ENCODE measurements at regions of chr16 and their contacts with region 1.

Region 1: DNA sequence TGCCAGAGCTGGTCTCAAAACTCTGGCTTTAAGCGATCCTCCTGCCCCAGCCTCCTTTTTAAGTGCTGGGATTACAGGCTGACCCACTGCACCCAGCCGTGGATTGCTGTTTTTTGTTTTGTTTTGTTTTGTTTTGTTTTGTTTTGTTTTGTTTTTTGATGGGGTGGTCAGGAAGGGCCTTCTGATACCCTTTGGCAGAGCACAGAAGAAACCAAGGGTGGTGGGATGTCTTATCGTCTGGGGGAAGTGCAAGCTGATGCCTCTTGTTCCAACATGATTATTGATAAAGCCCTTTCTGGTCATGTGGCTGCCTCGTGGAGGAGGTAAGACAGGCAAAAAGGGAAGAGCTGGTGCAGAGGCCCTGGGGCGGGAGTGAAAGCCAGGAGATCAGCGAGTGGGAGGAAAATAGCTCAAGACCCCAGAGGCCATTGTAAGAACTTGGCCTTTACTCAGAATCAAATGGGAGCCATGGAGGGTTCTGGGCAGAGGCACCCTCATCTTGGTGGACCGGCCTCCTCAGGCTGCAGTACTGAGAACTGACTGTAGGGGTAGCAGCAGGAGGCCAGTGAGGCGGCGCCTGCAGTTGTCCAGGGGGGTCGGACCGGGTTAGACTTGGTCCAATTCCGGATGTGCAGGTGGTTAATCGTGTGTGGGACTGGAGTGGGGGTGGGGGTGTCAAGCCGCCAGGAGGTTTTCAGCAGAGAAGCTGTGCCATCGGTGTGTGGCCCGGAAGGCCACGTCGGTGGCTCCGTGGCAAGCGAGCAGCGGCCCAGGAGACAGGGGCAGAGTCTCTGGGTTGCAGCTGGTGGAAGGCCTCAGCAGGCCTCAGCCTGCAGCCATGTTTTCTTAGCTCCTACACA is 84.4 kb upstream of the GSE1 start:
- DNase-seq: no peak
- H3K4me3 ChIP-seq: no peak overlapping the region
- H3K27ac ChIP-seq: no peak overlapping the region
- H3K4me1 ChIP-seq: peaks cover 3 to 24% (median 13%) of the 10 kb centered on the region in 4 experiments
- H3K27me3 ChIP-seq: no peaks in the 10 kb centered on the region
- CTCF ChIP-seq: peak; percentile 37 to 57 (median 47)
- EP300 ChIP-seq: no peak
- POLR2A ChIP-seq: no peak
- RAD21 ChIP-seq: no peak; a peak in 1 of 4 replicates

Region 2: DNA sequence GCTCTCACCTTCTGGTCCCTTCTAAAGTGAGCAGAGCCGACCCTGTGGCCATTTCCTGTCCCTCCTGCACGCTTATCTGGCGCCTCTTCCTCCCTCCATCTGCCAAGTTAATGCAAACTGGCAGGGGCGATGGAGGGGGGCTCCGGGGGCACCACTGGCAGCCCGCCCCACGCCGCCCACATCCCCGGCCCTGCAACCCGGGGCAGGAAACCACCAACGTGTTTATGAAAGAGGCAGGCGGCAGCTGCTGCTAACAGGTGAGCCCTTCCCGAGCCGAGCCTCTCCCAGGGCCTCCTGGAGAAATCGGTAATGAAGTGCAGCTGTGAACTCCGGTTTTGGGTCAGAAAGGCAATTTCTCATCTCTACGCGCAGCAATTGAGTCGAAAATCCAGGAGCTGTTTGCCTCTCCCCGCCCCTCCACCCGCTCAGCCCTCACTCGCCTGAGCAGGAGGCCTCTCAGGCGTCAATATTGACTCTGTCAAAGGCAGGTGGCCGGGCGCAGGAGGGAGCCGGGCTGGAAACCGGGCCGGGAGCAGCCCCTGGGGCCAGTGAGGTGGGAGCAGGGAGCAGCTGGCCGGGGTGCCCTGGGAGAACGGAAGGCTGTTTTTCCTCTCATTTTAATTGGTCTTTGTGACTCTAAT is 80.1 kb before region 1 on chr16:
- CTCF ChIA-PET with region 1: interaction called, 12 read pairs
- POLR2A ChIA-PET with region 1: interaction called, 3 read pairs
- DNase-seq: no peak
- H3K4me3 ChIP-seq: no peak overlapping the region
- H3K27ac ChIP-seq: no peak overlapping the region
- H3K4me1 ChIP-seq: peaks cover 0 to 23% (median 16%) of the 10 kb centered on the region in 4 experiments; a peak in 6 of 7 replicates
- H3K27me3 ChIP-seq: no peaks in the 10 kb centered on the region
- CTCF ChIP-seq: no peak
- EP300 ChIP-seq: no peak
- POLR2A ChIP-seq: no peak
- RAD21 ChIP-seq: no peak

Region 3: DNA sequence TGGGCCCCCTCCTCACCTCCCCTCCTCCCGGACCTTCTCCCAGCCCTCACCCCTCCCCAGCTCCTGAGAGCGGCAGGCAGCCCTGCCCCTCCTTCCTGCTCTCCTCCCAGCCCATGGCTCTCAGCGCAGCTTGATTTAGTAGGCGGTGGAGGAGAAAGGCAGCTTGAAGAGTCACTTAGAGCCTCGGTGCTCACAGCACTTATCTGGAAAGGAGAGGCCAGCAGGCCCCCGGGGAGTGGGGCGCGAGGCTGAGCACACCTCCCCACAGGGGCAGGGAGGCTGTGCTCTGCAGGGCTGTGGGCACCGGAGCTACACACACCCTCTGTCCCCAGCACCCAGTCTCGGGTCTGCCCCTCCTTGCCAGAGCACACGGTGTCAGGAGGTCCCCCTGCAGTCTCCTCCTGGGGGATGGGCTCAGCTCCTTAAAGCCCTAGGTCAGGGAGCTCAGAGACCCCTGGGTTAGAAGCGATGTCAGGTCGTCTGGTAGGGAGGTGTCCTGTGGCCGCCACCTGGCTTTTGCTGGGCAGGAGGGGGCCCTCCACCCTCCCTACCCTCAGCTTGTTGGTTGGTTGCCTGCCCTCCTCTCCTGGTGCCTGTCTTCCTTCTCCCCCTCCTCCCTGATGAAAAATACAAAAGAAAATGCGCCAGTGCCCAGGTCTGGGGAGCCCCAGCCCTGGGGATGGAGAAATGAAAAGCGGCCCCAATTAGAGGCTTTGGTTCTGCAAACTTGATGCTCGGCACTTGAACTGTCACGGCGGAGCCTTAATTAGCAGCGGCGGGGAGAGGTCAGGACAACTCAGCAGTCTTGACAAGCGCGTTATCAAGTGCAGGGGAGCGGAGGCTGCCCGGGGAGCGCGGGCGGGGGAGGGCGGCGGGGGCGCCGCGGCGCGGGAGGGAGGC is 66.7 kb before region 1 on chr16:
- CTCF ChIA-PET with region 1: interaction called, 11 read pairs
- POLR2A ChIA-PET with region 1: no interaction called
- DNase-seq: peak in 1 of 2 experiments; percentile 76
- H3K4me3 ChIP-seq: peak overlapping the region; percentile 4 to 57 (median 46)
- H3K27ac ChIP-seq: no peak overlapping the region
- H3K4me1 ChIP-seq: peaks cover 7 to 33% (median 25%) of the 10 kb centered on the region in 4 experiments
- H3K27me3 ChIP-seq: peaks cover 5 to 49% (median 36%) of the 10 kb centered on the region in 4 experiments; a peak in 6 of 7 replicates
- CTCF ChIP-seq: no peak
- EP300 ChIP-seq: no peak
- POLR2A ChIP-seq: no peak
- RAD21 ChIP-seq: no peak

Region 4: DNA sequence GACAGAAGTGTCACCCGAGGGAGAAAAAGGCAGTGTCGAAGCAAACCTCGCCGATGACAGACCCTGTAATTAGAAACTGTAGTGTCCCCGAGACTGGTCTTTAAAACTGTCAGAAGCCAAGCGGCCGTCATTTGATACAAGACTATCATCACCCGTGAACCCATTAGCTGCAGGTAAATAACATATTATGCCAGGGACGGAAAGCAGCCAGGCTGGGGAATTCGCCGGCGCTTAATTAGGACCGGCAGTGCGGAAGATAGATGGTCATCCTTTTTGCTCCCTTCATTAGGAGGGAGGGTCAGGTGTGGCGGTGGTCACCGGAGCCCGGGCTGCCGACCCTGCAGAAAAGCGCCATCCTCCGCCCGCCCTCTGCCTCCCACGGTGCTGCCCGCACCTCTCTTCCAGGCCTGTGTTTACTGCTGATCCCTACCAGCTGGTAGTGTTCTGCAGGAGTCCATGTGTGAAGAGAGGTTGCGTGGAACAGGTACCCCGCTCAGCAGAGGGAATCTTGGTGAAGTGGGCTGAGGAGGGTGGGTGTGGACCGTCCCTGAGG is 25.0 kb before region 1 on chr16:
- CTCF ChIA-PET with region 1: interaction called, 21 read pairs
- POLR2A ChIA-PET with region 1: interaction called, 3 read pairs
- DNase-seq: no peak
- H3K4me3 ChIP-seq: no peak overlapping the region
- H3K27ac ChIP-seq: no peak overlapping the region
- H3K4me1 ChIP-seq: peaks cover 2 to 14% (median 11%) of the 10 kb centered on the region in 4 experiments; a peak in 6 of 7 replicates
- H3K27me3 ChIP-seq: no peaks in the 10 kb centered on the region; a peak in 1 of 7 replicates
- CTCF ChIP-seq: no peak
- EP300 ChIP-seq: no peak
- POLR2A ChIP-seq: no peak
- RAD21 ChIP-seq: no peak

Region 5: GRCh38 chr16:85514595-85515318 is 14.0 kb before region 1 on chr16:
- CTCF ChIA-PET with region 1: interaction called, 29 read pairs
- POLR2A ChIA-PET with region 1: interaction called, 7 read pairs
- DNase-seq: no peak
- H3K4me3 ChIP-seq: no peak overlapping the region
- H3K27ac ChIP-seq: no peak overlapping the region
- H3K4me1 ChIP-seq: peaks cover 0 to 20% (median 14%) of the 10 kb centered on the region in 4 experiments; a peak in 6 of 7 replicates
- H3K27me3 ChIP-seq: no peaks in the 10 kb centered on the region; a peak in 1 of 7 replicates
- CTCF ChIP-seq: no peak
- EP300 ChIP-seq: no peak
- POLR2A ChIP-seq: no peak
- RAD21 ChIP-seq: no peak

Region 6: GRCh38 chr16:85541980-85542900 is 13.5 kb after region 1 on chr16:
- CTCF ChIA-PET with region 1: interaction called, 153 read pairs
- POLR2A ChIA-PET with region 1: interaction called, 4 read pairs
- DNase-seq: no peak
- H3K4me3 ChIP-seq: no peak overlapping the region
- H3K27ac ChIP-seq: no peak overlapping the region
- H3K4me1 ChIP-seq: peaks cover 0 to 14% (median 9%) of the 10 kb centered on the region in 4 experiments; a peak in 6 of 7 replicates
- H3K27me3 ChIP-seq: no peaks in the 10 kb centered on the region
- CTCF ChIP-seq: no peak
- EP300 ChIP-seq: no peak
- POLR2A ChIP-seq: no peak
- RAD21 ChIP-seq: no peak

Region 7: DNA sequence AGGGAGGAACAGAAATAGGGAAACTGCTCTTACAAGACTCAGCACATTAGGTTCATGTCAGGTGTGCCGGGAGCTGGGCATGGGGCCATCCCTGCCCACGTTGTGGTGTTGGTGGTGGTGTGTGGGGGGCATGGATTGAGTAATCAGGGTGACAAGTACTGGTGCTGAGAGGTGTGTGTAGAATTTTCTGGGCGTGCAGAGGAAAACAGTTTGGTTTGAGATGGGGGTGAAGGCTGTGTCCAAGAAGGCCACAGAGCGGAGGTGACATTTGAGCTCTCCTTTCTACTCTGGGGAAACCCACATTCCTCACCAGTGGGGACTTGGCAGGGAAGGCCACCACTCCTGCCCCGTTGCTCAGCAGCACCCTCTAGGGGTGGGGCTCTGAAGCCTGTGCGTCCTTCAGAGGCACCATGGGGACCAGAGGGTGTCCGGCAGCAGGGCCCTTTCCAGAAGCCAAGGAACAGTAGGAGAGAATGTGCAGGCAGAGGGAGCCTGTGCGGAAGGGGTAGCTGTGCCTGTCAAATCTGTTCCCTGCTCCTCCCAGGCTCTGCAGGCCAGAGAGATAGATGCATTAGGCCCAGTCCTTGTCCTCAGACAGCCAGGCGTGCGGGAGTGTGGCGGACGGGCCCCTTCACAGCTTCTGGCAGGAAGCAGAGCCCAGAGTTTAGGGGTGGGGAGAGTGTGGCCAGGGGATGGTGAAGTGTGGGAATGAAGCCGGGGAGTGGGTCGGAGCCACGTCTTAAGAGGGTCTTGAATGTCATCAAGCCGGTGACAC is 35.7 kb after region 1 on chr16:
- CTCF ChIA-PET with region 1: interaction called, 48 read pairs
- POLR2A ChIA-PET with region 1: interaction called, 3 read pairs
- DNase-seq: no peak
- H3K4me3 ChIP-seq: no peak overlapping the region
- H3K27ac ChIP-seq: no peak overlapping the region
- H3K4me1 ChIP-seq: peaks cover 14 to 52% (median 27%) of the 10 kb centered on the region in 4 experiments
- H3K27me3 ChIP-seq: no peaks in the 10 kb centered on the region
- CTCF ChIP-seq: peak; percentile 53 to 70 (median 68)
- EP300 ChIP-seq: no peak
- POLR2A ChIP-seq: no peak
- RAD21 ChIP-seq: peak in 1 of 2 experiments; percentile 18; a peak in 1 of 4 replicates

Region 8: DNA sequence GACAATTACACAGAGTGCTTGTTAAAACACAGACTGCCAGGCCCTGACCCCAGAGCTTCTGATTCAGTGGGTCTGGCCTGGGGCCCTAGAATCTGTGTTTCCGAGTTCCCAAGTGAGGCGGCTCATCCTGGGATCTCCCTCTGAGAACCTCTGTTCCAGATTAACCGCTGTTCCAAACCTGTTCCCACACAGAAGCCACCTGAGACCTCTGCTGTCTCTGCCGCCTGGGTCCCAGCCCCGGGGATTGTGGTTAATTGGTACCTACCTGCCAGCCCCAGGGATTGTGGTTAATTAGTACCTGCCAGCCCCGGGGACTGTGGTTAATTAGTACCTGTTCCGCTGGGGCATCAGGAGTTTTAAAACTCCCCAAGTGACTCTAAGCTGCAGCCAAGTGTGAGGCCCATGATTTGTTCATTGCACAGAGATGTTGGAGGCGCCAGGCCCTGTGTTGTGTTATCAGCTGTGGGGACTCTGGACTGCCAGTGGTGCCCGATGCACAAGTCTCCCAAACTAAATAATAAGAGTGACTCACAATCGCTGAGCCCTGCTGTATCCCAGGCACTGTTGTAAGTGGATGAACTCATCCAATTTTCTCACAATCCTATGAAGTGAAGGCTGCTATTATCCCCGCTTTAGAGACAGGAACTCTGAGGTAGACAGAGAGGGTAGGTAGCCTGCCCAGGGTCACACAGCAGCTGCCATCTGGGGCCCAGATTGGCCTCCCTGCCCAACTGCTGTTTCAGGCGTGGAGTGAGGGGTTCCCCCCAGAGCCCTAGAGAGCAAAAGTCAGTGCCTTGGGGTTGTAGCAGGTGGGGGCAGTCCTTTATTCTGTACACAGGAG is 589.9 kb after region 1 on chr16:
- CTCF ChIA-PET with region 1: no interaction called
- POLR2A ChIA-PET with region 1: no interaction called
- DNase-seq: no peak
- H3K4me3 ChIP-seq: no peak overlapping the region
- H3K27ac ChIP-seq: no peak overlapping the region
- H3K4me1 ChIP-seq: peaks cover 0 to 13% (median 1%) of the 10 kb centered on the region in 4 experiments; a peak in 2 of 7 replicates
- H3K27me3 ChIP-seq: 0 out of 7 replicates have a peak, but pooled peaks cover 0 to 2% (median 0%) of the 10 kb centered on the region in 4 experiments
- CTCF ChIP-seq: no peak
- EP300 ChIP-seq: no peak
- POLR2A ChIP-seq: no peak
- RAD21 ChIP-seq: no peak